ENCODE measurements at regions of chr2 and their contacts with region 1.

Region 1: DNA sequence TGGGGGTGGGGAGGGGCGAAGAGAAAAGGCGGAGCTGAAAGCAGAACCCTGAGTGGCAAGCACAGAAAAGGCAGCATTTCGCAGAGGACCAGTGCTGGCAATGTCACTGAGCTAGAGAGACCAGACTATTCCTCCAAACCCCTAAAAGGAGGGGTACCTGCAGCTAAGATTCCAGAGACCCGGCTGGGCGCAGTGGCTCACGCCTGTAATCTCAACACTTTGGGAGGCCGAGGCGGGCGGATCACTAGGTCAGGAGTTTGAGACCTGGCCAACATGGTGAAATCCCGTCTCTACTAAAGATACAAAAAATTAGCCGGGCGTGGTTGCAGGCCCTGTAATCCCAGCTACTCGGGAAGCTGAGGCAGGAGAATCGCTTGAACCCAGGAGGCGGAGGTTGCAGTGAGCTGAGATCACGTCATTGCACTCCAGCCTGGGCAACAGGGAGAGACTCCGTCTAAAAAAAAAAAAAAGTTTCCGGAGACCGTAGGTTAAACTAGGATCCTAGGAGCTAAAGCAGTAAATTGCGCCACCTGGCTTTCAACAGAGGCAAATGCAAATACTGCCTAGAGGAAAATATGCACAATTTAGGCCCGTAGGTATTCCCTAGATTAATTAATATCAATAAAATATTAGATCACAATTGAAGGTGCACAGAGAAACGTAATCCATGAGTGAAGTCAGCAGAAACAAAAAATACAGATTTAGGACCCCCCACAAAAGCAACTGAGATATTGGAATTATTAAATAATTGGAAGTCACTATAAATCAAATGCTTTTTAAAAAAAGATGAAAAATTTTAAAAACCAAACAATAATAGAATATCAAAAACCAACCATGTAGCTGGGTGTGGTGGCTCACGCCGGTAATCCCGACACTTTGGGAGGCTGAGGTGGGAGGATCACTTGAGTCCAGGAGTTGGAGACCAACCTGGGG is 4.9 kb downstream of the UCN start:
- DNase-seq: peak; percentile 36 to 64
- H3K4me3 ChIP-seq: peak overlapping the region; percentile 19; the same call in 1 of the 2 replicates
- H3K27ac ChIP-seq: no peak overlapping the region
- H3K4me1 ChIP-seq: no peaks in the 10 kb centered on the region; the same call in 1 of the 2 replicates
- H3K27me3 ChIP-seq: no peaks in the 10 kb centered on the region
- CTCF ChIP-seq: peak; percentile 97

Region 2: GRCh38 chr2:26959331-26959730 is 344.0 kb before region 1 on chr2:
- CTCF ChIA-PET with region 1: no interaction called
- POLR2A ChIA-PET with region 1: no interaction called
- intact Hi-C with region 1: loop called (anchors 1 kb)
- DNase-seq: no peak
- H3K4me3 ChIP-seq: no peak overlapping the region
- H3K27ac ChIP-seq: no peak overlapping the region
- H3K4me1 ChIP-seq: peaks cover 10% of the 10 kb centered on the region
- H3K27me3 ChIP-seq: peaks cover 14% of the 10 kb centered on the region; the same call in 1 of the 2 replicates
- CTCF ChIP-seq: no peak

Region 3: GRCh38 chr2:27095745-27096651 is 207.4 kb before region 1 on chr2:
- CTCF ChIA-PET with region 1: no interaction called
- POLR2A ChIA-PET with region 1: no interaction called
- intact Hi-C with region 1: loop called (anchors 1 kb)
- DNase-seq: no peak
- H3K4me3 ChIP-seq: peak overlapping the region; percentile 39; the same call in 1 of the 2 replicates
- H3K27ac ChIP-seq: no peak overlapping the region
- H3K4me1 ChIP-seq: no peaks in the 10 kb centered on the region
- H3K27me3 ChIP-seq: no peaks in the 10 kb centered on the region
- CTCF ChIP-seq: no peak

Region 4: DNA sequence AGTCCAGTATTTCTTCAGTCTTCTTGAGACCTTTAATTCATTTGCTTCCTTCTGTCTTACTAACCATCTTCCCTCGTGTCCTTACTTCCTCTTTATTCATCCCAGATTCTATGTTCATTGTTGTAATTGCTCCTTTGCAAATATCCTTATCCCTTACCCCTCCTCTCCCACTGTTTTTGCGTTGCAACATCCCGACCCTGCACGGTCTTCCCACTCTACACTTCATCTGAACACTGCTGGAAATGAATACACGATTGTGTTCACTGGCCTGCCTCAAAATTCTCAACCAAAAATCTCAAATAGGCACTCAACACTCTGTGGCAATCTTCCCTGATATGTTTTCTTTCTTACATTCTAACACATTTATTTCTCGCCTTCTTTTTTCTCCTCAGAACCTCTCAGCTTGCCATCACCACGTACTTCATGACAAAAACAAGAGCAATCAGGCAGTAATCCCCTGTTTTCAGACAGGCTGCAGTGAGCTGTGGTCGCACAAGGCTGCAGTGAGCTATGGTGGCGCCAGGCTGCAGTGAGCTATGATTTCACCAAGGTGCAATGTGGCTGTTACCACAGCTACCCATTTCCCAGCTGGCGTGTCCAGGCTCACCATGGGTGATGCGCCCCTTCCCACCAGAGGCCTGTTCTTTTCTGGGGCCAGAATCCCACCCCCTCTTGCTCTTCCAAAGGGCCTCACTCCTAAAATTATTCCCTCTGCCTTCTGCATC is 128.9 kb before region 1 on chr2:
- CTCF ChIA-PET with region 1: interaction called, 18 read pairs
- POLR2A ChIA-PET with region 1: no interaction called
- intact Hi-C with region 1: no loop called
- DNase-seq: no peak
- H3K4me3 ChIP-seq: no peak overlapping the region
- H3K27ac ChIP-seq: no peak overlapping the region
- H3K4me1 ChIP-seq: no peaks in the 10 kb centered on the region
- H3K27me3 ChIP-seq: peaks cover 17% of the 10 kb centered on the region; the same call in 1 of the 2 replicates
- CTCF ChIP-seq: no peak

Region 5: GRCh38 chr2:27249891-27250651 is 53.3 kb before region 1 on chr2:
- CTCF ChIA-PET with region 1: interaction called, 3 read pairs
- POLR2A ChIA-PET with region 1: interaction called, 3 read pairs
- intact Hi-C with region 1: loop called (anchors 1 kb)
- DNase-seq: peak in 1 of 2 experiments; percentile 50
- H3K4me3 ChIP-seq: no peak overlapping the region
- H3K27ac ChIP-seq: no peak overlapping the region
- H3K4me1 ChIP-seq: no peaks in the 10 kb centered on the region
- H3K27me3 ChIP-seq: no peaks in the 10 kb centered on the region; the same call in 1 of the 2 replicates
- CTCF ChIP-seq: peak; percentile 72

Region 6: DNA sequence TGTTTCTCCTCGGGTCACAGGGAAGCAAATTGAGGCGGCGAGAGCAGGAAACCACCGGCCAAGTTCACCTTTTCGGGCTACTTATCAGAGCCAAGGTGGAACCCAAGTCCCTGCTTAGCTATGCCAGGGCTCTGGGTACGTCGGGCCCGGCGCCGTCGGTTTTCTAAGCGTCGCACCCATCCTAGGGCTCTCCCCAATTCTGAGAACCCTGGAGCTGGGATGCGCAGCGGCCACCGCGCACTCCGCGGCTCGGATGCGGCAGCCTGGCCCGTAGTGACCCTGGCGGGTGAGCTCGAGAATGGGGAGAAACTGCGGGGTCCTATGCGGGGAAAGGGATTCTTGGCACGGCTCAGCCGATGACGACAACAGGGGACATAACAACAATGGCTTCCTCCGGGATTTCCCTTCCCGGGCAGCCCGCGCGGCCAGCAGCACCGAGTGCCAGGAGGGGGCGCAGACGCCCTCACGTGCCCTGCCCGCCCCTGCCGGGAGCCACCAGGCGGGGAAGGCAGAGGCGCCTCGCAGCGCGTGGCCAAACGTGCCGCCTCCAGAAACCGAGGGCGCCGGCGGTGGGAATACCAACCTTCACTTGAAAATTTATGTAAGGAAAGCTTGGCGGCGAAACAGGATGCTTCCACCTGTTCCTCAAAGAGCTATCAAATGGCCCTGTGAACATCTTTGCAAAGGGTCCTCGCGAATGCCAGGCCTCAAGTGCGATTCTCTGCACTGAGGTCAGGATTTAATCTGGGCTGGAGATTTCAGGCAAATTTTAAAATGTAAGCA is 38.4 kb before region 1 on chr2:
- CTCF ChIA-PET with region 1: interaction called, 4 read pairs
- POLR2A ChIA-PET with region 1: no interaction called
- intact Hi-C with region 1: loop called (anchors 5 kb)
- DNase-seq: peak in 1 of 2 experiments; percentile 66
- H3K4me3 ChIP-seq: no peak overlapping the region
- H3K27ac ChIP-seq: no peak overlapping the region
- H3K4me1 ChIP-seq: no peaks in the 10 kb centered on the region
- H3K27me3 ChIP-seq: peaks cover 52% of the 10 kb centered on the region
- CTCF ChIP-seq: no peak; the same call in 1 of the 2 replicates

Region 7: DNA sequence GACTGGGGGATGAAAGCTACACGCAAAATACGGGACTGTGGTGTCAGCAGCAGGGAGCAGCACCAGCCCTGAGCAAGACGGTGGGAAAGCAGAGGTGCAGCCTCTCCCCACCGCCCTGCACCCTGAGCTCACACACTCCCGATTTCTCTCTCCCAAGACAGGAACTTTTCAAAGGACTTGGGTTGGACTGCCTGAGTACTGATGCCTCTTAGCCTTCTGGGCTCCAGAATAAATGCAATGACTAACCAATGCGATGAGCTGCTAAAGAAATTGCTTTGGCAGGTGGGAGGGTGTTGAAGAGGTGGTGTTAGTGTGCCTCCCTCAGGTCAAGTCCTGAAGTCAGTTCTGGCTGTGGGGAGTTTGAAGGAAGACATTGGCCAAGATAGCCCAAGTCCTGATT is 11.5 kb before region 1 on chr2:
- CTCF ChIA-PET with region 1: interaction called, 13 read pairs
- POLR2A ChIA-PET with region 1: interaction called, 4 read pairs
- intact Hi-C with region 1: no loop called
- DNase-seq: no peak
- H3K4me3 ChIP-seq: no peak overlapping the region
- H3K27ac ChIP-seq: peak overlapping the region; percentile 81
- H3K4me1 ChIP-seq: peaks cover 33% of the 10 kb centered on the region
- H3K27me3 ChIP-seq: no peaks in the 10 kb centered on the region
- CTCF ChIP-seq: no peak